ENCODE measurements at regions of chr1 and their contacts with region 1.

Region 1: GRCh38 chr1:46575300-46575699 is 23.9 kb upstream of the KNCN start:
- DNase-seq: no peak
- H3K4me3 ChIP-seq: no peak overlapping the region
- H3K27ac ChIP-seq: no peak overlapping the region
- H3K4me1 ChIP-seq: no peaks in the 10 kb centered on the region
- H3K27me3 ChIP-seq: no peaks in the 10 kb centered on the region
- CTCF ChIP-seq: no peak

Region 2: DNA sequence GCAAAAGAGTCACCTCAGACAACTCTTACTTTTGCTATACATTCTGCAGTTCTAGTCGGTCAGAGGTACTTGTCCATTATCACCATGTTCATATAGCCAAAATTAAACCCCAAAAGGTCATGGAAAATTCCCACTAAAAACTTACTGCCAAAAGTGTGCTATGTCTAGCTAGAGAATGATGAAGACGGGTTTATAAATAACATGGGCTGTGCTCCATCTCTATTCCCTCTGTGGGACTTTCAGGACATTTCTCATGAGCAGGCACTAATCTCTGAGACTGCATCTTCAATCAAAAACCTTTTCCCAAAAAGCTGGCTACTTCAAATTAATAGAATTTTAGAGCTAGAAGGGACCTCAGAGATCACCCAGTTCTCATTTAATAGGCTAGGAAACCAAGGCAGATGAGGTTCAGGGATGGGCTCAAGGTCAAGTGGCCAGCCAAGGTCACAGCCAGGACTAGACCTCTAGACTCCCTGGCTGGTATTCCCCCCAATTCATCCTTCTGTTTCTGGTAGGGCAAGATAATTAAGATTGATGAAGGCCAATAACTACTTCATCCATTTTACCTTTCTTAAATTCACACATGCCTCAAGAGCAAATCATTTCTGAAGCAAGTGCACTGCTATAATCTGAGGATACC is 62.3 kb after region 1 on chr1:
- CTCF ChIA-PET with region 1: no interaction called
- dilution Hi-C with region 1: loop called (anchors 5 kb)
- in situ Hi-C with region 1: no loop called
- intact Hi-C with region 1: no loop called
- DNase-seq: no peak
- H3K4me3 ChIP-seq: no peak overlapping the region
- H3K27ac ChIP-seq: no peak overlapping the region
- H3K4me1 ChIP-seq: peaks cover 6% of the 10 kb centered on the region
- H3K27me3 ChIP-seq: no peaks in the 10 kb centered on the region
- CTCF ChIP-seq: no peak

Region 3: GRCh38 chr1:46673749-46674182 is 98.5 kb after region 1 on chr1:
- CTCF ChIA-PET with region 1: no interaction called
- dilution Hi-C with region 1: loop called (anchors 5 kb)
- in situ Hi-C with region 1: no loop called
- intact Hi-C with region 1: no loop called
- DNase-seq: no peak
- H3K4me3 ChIP-seq: no peak overlapping the region
- H3K27ac ChIP-seq: no peak overlapping the region
- H3K4me1 ChIP-seq: peaks cover 3% of the 10 kb centered on the region
- H3K27me3 ChIP-seq: no peaks in the 10 kb centered on the region
- CTCF ChIP-seq: no peak

Measured in mammary epithelial cell (primary cell).